ENCODE measurements at regions of chr1 and their contacts with region 1.

Region 1: GRCh38 chr1:78676347-78676982 is 26.8 kb downstream of the IFI44 start:
- DNase-seq: peak; percentile 69
- ATAC-seq: peak; percentile 36
- H3K4me3 ChIP-seq: no peak overlapping the region
- H3K4me3 Mint-ChIP-seq: no peak overlapping the region
- H3K27ac ChIP-seq: no peak overlapping the region
- H3K27ac Mint-ChIP-seq: no peak overlapping the region
- H3K4me1 ChIP-seq: no peaks in the 10 kb centered on the region
- H3K4me1 Mint-ChIP-seq: no peaks in the 10 kb centered on the region
- H3K27me3 ChIP-seq: no peaks in the 10 kb centered on the region
- H3K27me3 Mint-ChIP-seq: no peaks in the 10 kb centered on the region
- CTCF ChIP-seq: peak; percentile 82

Region 2: DNA sequence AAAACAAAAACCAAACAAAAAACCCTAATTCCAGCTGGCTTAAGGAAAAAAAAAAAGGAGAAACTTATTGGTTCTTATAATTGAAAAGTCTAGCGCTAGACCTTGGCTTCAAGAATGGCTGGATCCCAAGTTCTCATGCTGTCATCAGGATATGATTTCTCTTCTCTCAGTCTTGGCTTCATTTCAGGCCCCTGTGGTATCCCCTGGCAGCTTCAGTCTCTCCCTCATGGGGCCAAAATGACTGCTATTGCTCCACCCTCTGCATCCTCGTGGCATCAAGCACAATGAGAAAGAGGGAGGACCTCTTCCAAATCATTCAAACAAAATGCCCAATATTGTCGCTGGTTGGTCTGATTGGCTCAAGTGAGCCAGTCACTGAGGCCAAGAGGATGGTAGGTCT is 550.0 kb before region 1 on chr1:
- CTCF ChIA-PET with region 1: interaction called, 26 read pairs
- POLR2A ChIA-PET with region 1: no interaction called
- intact Hi-C with region 1: loop called (anchors 1 kb)
- DNase-seq: no peak
- ATAC-seq: no peak
- H3K4me3 ChIP-seq: no peak overlapping the region
- H3K4me3 Mint-ChIP-seq: no peak overlapping the region
- H3K27ac ChIP-seq: no peak overlapping the region
- H3K27ac Mint-ChIP-seq: no peak overlapping the region
- H3K4me1 ChIP-seq: no peaks in the 10 kb centered on the region
- H3K4me1 Mint-ChIP-seq: no peaks in the 10 kb centered on the region
- H3K27me3 ChIP-seq: peaks cover 0 to 5% (median 0%) of the 10 kb centered on the region in 4 experiments
- H3K27me3 Mint-ChIP-seq: no peaks in the 10 kb centered on the region
- CTCF ChIP-seq: no peak

Region 3: DNA sequence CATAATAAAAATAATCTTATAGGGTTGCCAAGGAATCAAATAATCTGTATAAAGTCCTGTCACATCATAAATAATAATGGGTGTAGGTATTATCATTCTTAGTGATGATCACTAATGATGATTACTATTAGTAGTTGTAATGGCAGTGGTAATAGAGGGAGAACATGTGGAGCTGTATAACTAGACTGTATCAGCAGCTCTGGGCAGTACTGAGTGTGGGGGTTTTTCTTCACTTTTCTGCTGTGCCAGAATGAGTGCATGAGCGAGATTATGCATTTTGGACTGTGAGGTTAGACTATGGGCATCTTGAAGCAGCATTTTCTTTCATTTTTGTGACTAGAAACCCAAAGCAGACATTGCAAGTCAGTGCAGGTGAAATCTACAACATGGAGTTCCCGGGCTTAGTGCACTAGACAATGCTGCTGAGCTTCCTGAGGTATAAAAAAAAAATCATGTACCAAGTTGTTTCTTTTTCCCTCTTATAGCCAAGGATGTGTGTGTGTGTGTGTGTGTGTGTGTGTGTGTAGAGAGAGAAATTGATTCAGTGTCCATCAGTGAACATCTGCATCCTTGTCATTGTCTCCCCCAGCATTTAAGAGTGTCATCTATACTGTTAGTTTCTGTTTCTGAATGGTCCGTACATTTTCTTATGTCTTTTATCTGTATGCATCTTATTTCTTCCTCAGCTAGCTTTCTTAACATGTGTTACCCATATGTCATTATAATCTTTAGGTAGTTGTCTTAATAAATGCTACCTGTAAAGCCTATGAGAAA is 544.1 kb before region 1 on chr1:
- CTCF ChIA-PET with region 1: interaction called, 26 read pairs
- POLR2A ChIA-PET with region 1: no interaction called
- intact Hi-C with region 1: loop called (anchors 1 kb)
- DNase-seq: no peak
- ATAC-seq: no peak
- H3K4me3 ChIP-seq: no peak overlapping the region
- H3K4me3 Mint-ChIP-seq: no peak overlapping the region
- H3K27ac ChIP-seq: no peak overlapping the region
- H3K27ac Mint-ChIP-seq: no peak overlapping the region
- H3K4me1 ChIP-seq: no peaks in the 10 kb centered on the region
- H3K4me1 Mint-ChIP-seq: no peaks in the 10 kb centered on the region
- H3K27me3 ChIP-seq: no peaks in the 10 kb centered on the region
- H3K27me3 Mint-ChIP-seq: no peaks in the 10 kb centered on the region
- CTCF ChIP-seq: no peak

Region 4: GRCh38 chr1:78145105-78145580 is 531.3 kb before region 1 on chr1:
- CTCF ChIA-PET with region 1: interaction called, 10 read pairs
- POLR2A ChIA-PET with region 1: no interaction called
- intact Hi-C with region 1: loop called (anchors 1 kb)
- DNase-seq: peak; percentile 59
- ATAC-seq: peak; percentile 50
- H3K4me3 ChIP-seq: no peak overlapping the region
- H3K4me3 Mint-ChIP-seq: no peak overlapping the region
- H3K27ac ChIP-seq: no peak overlapping the region
- H3K27ac Mint-ChIP-seq: no peak overlapping the region
- H3K4me1 ChIP-seq: peaks cover 17 to 22% of the 10 kb centered on the region in 2 donors
- H3K4me1 Mint-ChIP-seq: peaks cover 28% of the 10 kb centered on the region
- H3K27me3 ChIP-seq: no peaks in the 10 kb centered on the region
- H3K27me3 Mint-ChIP-seq: peaks cover 17% of the 10 kb centered on the region
- CTCF ChIP-seq: peak; percentile 95

Region 5: DNA sequence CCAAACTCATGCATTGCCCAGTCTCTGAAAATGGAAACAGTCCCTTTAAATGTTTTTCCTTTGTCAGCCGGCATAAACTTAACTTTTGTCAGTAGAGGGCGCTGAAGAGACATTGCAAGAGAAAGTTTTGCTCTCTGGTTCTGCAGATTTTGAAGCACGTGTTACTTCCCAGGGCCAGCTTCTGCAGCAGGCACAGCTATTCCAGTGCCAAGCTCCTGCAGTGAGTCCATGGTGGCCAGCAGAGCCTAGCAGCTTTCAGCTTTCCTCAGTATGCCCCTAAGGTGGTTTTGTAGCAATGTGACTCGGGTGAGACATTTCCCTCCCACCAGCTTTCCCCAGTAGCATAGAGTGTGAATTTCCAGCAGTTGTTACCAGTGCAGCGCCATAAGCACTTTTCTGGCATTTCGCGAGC is 58.8 kb before region 1 on chr1:
- CTCF ChIA-PET with region 1: interaction called, 46 read pairs
- POLR2A ChIA-PET with region 1: no interaction called
- intact Hi-C with region 1: loop called (anchors 1 kb)
- DNase-seq: peak; percentile 78
- ATAC-seq: peak; percentile 63
- H3K4me3 ChIP-seq: no peak overlapping the region
- H3K4me3 Mint-ChIP-seq: peak overlapping the region; percentile 27
- H3K27ac ChIP-seq: no peak overlapping the region
- H3K27ac Mint-ChIP-seq: no peak overlapping the region
- H3K4me1 ChIP-seq: peaks cover 18 to 24% of the 10 kb centered on the region in 2 donors
- H3K4me1 Mint-ChIP-seq: peaks cover 36% of the 10 kb centered on the region
- H3K27me3 ChIP-seq: no peaks in the 10 kb centered on the region
- H3K27me3 Mint-ChIP-seq: no peaks in the 10 kb centered on the region
- CTCF ChIP-seq: peak; percentile 86

Measured in B cell (primary cell).